ENCODE measurements at regions of chr10 and their contacts with region 1.

Region 1: DNA sequence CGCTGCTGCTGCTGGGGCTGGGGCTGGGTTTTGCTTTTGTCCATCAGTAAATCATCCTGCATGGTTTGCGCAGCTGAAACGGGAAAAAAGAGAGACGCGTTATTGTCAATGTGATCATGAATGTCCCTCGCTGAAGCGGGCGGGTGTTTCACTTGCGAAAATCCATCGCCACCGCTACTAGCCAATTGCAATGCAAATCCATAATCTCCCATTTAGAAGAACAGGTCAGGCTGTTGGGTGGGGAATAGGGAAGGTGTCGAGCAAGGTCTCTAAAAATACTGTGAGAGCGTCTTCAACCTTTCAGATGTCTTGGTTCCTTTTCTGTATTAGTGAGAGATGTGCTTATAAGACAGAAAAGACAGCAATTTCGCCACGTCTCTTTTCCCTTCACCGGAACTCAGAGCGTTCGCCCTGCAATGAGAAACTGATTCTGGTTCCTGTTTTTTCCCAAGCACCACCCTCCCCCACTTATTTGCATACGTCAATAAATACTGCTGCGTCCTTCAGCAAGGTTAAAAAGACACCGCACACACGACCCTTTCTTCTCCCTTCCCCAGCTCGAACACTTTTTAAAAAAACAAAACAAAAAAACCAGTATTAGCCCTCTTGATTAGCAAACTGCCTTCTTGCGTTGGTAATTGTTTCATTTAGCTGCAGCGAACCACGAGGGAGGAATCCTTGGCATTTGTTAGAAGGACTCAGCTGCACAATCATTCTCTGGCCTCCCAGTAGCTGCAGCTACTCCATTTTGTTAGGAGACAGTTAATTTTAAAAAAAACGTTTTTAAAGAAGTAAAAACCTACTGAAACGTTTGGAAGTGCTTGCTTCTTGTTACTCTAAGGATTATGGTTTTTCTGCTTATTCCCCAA is 50.4 kb downstream of the CPEB3 start:
- DNase-seq: peak in 2 of 3 donors; percentile 48 to 88
- ATAC-seq: peak; percentile 79
- H3K4me3 ChIP-seq: peak overlapping the region; percentile 41
- H3K4me1 ChIP-seq: peaks cover 20% of the 10 kb centered on the region
- CTCF ChIP-seq: no peak

Region 2: DNA sequence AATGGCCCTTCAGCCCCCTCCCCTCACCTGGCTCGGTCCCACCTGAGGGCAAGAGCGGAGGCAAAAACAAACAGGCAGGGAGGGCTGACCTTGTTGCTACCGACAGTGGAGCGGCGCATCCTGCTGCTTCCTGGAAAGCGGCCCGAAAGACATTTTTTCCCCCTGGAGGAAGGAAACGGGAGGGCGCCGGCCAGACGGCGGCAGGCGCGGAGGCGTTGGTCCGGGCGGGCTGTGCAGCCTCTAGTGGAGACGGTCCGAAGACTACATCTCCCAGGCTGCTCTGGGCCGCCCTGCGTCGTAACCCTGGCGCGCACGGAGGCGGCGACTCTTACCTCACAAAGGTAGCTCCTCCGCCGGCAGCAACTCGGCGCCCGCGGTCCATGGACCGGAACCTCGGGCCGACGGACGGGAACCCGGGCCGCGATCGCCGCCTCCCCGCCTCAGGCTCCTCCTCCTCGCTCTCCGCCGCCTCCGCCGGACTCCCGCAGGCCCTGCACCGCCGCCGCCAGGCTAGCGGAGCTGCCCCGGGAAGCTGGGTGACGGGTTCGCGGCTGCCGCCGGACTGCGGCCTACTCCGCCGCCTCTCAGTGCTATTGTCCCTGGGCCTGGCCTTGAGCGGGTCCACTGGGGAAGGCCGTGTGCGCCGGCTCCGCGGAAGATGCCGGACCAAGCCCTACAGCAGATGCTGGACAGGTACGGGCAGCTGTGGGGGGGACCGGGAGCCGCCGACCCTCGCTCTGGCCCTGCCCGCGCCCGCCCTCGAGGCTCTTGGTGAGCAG is 50.5 kb after region 1 on chr10 and contains the starts of genes CPEB3 and MARCHF5:
- intact Hi-C with region 1: loop called in 1 of 2 experiments (anchors 5 kb)
- DNase-seq: peak; percentile 96 to 98 (median 97)
- ATAC-seq: peak; percentile 98
- H3K4me3 ChIP-seq: peak within 1 kb of the TSS; percentile 90
- H3K4me1 ChIP-seq: no peaks in the 10 kb centered on the region
- CTCF ChIP-seq: peak; percentile 58
- total RNA-seq, gene CPEB3: 7.4 to 11.0 (median 8.2) TPM
- total RNA-seq, gene MARCHF5: 30.5 to 37.2 (median 33.3) TPM

Measured in mucosa of descending colon (tissue), 3 donors.